A673 (cell line): ENCODE measurements at regions of chr11 and their contacts with region 1.

Region 1: GRCh38 chr11:113553235-113553634 is 78.0 kb upstream of the DRD2 start:
- DNase-seq: peak; percentile 85
- H3K4me3 ChIP-seq: no peak overlapping the region
- H3K27ac ChIP-seq: no peak overlapping the region
- H3K4me1 ChIP-seq: no peaks in the 10 kb centered on the region
- H3K27me3 ChIP-seq: no peaks in the 10 kb centered on the region
- CTCF ChIP-seq: no peak

Region 2: DNA sequence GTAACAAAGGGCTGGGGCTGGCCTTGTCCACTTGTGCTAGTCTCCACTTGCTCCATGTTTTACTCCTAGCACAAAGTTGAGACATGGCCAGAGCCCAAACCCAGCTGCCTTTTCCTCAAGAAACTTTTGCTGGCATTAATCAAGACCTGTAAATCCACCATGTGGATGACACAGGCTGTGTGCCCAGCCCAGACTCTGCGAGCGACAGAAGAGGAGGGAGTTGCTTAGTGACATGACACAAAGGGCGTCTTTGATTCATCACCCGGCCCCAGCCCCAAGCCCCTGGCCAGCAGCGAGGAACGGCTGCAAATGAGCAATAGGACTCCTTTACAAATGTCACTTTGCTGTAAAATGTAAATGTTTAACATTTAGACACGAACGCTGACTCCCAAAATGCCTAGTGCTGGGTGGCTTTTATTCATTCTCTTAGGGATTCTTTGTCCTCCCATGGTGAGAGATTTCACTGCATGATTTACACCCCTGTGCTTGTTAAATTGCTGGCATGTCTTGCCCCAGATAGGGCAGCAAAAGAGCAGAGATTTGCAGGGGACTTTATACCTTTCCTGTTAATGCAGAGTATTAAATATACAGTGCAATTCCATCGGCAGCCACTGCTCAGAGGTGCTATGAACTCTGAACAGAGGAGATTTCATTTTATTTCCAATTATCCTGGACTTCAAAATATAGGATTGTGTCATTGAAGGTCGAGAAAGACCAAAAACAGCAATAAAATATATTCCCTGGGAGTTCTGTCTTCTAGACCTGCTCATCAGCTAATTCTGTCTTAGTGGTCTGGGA is 855.7 kb before region 1 on chr11:
- CTCF ChIA-PET with region 1: no interaction called
- POLR2A ChIA-PET with region 1: no interaction called
- intact Hi-C with region 1: no loop called
- DNase-seq: no peak
- H3K4me3 ChIP-seq: no peak overlapping the region
- H3K27ac ChIP-seq: no peak overlapping the region
- H3K4me1 ChIP-seq: no peaks in the 10 kb centered on the region
- H3K27me3 ChIP-seq: no peaks in the 10 kb centered on the region
- CTCF ChIP-seq: peak; percentile 21; the same call in 1 of the 2 replicates

Region 3: DNA sequence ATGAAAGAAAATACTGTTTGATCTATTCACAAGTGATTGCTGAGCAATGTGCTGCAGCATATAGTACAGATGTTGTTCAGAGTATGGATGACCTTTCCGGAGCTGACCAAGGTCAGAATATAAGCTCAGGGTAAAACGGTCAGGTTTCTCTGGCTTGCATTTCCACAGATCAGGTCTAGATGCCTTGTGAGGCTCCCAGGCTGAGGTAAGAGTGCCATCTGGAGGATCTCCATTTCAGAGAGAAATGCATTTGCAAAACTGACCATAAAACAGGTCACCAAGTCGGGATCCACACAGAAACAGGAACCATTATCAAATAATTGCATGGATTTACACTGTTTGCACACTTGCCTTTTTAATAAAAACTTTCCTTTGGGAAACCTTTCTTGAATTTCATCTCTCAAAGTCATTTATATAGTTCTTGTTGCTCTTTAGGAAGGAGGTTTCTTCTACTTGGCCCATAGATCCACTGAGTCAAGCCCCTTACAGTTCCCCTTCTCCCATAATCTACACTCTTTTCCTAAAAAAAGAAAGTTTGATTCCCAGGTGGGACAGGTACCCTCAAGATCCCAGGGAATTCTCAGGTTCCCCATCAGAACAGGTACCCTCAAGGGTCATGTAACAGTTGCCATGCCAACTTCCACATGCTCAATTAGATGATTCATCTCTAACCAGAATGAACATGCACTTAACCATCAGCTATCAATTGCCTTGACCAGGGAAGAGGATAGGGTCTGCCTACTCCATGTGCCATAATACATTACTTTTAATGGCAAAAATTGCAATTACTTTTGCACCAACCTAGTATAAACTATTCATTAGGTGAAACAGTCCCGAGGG is 177.9 kb after region 1 on chr11:
- CTCF ChIA-PET with region 1: no interaction called
- POLR2A ChIA-PET with region 1: no interaction called
- intact Hi-C with region 1: loop called (anchors 10 kb)
- DNase-seq: peak; percentile 54
- H3K4me3 ChIP-seq: no peak overlapping the region
- H3K27ac ChIP-seq: no peak overlapping the region
- H3K4me1 ChIP-seq: no peaks in the 10 kb centered on the region
- H3K27me3 ChIP-seq: no peaks in the 10 kb centered on the region
- CTCF ChIP-seq: peak; percentile 60

Region 4: DNA sequence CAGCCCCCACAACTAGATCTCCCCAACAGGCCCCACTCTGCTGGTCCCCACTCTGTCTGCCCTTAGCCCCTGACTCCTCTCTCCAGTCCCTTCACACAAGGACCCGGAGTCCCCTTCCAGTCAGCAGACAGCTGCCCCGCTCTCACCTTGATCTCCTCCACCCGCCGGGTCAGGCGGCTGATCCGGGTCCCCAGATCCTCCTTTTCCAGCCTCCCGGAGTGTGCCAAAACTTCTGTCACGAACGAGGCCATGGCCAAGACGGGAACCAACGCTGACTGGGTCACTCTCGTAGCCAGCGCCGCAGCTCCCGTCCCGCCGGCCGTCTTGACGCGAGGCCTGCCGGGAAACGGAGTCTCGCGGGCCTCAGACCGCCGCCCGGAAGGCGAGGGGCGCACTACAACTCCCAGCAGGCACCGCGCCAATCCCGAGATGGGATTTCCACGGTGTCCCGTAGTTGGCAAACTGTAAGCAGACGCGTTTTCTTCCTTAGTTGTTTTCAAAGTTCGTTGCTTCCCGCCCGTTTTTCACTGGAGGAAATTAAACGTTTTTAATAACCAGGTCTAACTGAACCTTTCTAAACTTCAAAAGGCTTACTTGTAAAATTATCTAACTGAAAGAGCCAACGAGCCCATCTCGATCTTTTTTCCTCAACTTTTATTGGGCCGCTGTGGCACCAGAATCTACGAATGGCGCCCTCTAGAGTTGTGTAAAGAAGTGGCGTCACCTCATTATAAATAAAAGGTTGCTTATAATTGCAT is 220.4 kb after region 1 on chr11 and contains the start of gene ZW10:
- CTCF ChIA-PET with region 1: no interaction called
- POLR2A ChIA-PET with region 1: no interaction called
- intact Hi-C with region 1: loop called (anchors 10 kb)
- DNase-seq: peak; percentile 99
- H3K4me3 ChIP-seq: peak within 1 kb of the TSS; percentile 93
- H3K27ac ChIP-seq: peak within 1 kb of the TSS; percentile 88
- H3K4me1 ChIP-seq: peaks cover 13% of the 10 kb centered on the region
- H3K27me3 ChIP-seq: no peaks in the 10 kb centered on the region
- CTCF ChIP-seq: peak; percentile 98
- total RNA-seq, gene ZW10: 31.4 TPM in 2 replicates

Region 5: DNA sequence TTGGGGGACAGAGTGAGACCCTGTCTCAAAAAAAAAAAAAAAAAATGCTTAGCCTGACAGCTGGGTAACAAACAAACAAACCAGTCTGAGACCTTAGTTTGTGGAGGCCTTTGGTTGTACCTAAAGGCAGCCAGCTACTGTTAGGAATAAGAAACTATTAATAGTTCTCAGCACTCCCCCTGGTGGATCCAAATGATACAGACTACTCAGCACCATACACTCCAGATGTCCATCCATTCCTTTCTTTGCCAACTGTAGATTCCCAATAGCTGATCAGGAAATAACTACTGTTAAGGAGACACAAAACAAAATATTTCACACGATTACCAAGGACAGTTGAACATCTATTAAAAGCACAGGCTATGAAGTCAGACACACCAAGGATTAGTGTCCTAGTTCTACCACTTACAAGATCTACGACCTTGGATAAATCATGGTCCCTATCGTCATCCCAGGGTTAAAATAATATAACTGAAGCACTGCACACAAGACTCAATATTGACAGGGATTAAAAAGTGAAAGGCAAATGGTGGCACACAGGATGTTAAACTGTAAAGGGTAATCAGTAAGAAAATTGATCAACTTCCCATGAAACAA is 243.5 kb after region 1 on chr11:
- CTCF ChIA-PET with region 1: interaction called, 4 read pairs
- POLR2A ChIA-PET with region 1: no interaction called
- intact Hi-C with region 1: loop called (anchors 5 kb)
- DNase-seq: peak; percentile 71
- H3K4me3 ChIP-seq: no peak overlapping the region
- H3K27ac ChIP-seq: no peak overlapping the region
- H3K4me1 ChIP-seq: no peaks in the 10 kb centered on the region
- H3K27me3 ChIP-seq: no peaks in the 10 kb centered on the region
- CTCF ChIP-seq: peak; percentile 81